OCI-LY7 (cell line): ENCODE measurements at regions of chr19 and their contacts with region 1.

Region 1: DNA sequence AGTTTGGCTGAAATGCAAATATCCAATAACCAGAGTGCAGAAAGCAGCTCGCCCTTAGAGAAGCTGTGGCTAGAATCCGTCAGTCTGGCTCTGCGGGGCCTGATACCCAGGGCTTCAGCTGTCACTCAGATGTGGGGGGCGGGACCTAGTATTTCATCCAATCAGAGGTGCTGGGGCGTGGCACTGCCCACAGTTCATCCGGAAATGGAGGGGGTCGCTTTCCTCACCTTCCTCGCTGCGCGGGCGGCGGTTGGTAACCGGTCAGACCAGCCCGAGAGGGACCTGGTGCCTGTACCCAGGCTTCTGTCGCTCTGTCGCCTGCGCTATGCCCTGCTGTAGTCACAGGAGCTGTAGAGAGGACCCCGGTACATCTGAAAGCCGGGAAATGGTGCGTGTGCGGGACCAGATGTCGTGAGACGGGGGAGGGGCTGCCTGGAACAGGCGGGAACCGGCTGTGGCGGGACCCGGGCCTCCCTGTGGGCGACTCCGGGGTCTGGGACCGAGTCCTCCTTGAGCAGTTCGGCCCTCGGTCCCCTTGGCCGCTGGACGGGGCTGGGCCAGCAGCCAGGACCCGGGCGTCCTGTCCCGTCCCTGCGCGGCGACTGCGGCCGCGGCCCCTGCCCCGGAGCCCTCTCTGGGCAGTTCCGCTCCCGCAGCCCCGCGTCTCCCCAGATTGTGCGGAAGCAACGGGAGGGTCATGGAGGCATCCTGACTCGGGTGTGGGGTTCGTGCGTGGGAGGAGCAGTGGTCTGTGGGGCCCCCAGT is at the start of gene ZNF700:
- DNase-seq: peak; percentile 97
- H3K4me3 ChIP-seq: peak within 1 kb of the TSS; percentile 86
- H3K27ac ChIP-seq: peak within 1 kb of the TSS; percentile 94
- H3K4me1 ChIP-seq: peaks cover 17% of the 10 kb centered on the region
- CTCF ChIP-seq: no peak
- total RNA-seq, gene ZNF700: 18.2 and 20.4 TPM in 2 replicates

Region 2: DNA sequence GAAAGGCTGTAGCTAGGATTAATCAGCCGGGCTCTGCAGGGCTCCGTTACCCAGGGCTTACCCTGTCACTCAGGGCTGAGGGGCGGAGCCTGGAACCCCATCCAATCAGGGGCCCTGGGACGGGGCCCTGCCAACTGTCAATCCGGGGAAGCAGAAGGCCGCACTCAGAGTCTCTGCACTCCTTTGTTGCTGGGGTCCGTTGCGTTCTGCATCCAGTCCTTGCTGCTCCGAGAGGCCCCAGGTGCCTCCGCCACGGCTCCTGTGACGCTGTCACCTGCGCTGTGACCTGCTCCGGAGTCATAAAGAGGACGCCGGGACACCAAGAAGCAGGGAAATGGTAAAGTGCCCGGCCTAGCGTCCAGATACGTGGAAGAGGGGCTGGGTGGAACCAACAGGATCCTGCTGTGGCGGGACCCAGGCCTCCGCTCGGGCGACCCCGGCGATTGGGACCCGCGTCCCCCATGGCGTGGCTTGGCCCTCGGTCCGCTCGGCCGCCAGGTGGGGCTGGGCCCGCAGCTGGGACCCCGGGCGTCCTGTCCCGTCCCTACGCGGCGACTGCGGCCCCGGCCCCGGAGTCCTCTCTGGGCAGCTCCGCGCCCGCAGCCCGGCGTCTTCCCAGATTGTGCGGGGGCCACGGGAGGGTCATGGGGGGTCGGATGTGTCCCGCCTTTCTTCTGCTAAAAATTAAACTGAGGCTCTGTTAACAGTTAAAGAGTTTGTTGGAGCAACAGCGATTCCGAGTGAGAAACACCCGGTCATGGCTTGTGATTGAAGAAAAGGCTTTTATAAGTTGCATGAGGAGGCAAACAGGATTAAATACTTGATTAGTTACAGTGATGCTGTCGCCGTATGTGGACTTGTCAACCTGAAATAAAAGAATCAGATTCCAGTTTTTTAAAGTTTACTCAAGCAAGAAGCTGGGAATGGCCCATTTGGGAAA is 126.4 kb before region 1 on chr19 and contains the start of gene ZNF491:
- CTCF ChIA-PET with region 1: no interaction called
- POLR2A ChIA-PET with region 1: no interaction called
- intact Hi-C with region 1: loop called (anchors 5 kb)
- DNase-seq: peak; percentile 94
- H3K4me3 ChIP-seq: peak within 1 kb of the TSS; percentile 75
- H3K27ac ChIP-seq: peak within 1 kb of the TSS; percentile 34
- H3K4me1 ChIP-seq: peaks cover 32% of the 10 kb centered on the region
- CTCF ChIP-seq: peak; percentile 61
- total RNA-seq, gene ZNF491: 1.2 and 2.0 TPM in 2 replicates

Region 3: GRCh38 chr19:11881151-11881800 is 43.8 kb before region 1 on chr19:
- CTCF ChIA-PET with region 1: no interaction called
- POLR2A ChIA-PET with region 1: no interaction called
- intact Hi-C with region 1: loop called (anchors 2 kb)
- DNase-seq: peak; percentile 72
- H3K4me3 ChIP-seq: no peak overlapping the region
- H3K27ac ChIP-seq: no peak overlapping the region
- H3K4me1 ChIP-seq: no peaks in the 10 kb centered on the region
- CTCF ChIP-seq: peak; percentile 83

Region 4: GRCh38 chr19:11964858-11965645 is 40.0 kb after region 1 on chr19 and contains the start of gene ZNF763:
- CTCF ChIA-PET with region 1: interaction called, 5 read pairs
- POLR2A ChIA-PET with region 1: no interaction called
- intact Hi-C with region 1: loop called (anchors 1 kb)
- DNase-seq: peak; percentile 95
- H3K4me3 ChIP-seq: peak within 1 kb of the TSS; percentile 85
- H3K27ac ChIP-seq: peak within 1 kb of the TSS; percentile 63
- H3K4me1 ChIP-seq: peaks cover 15% of the 10 kb centered on the region
- CTCF ChIP-seq: no peak
- total RNA-seq, gene ZNF763: 2.7 and 2.8 TPM in 2 replicates

Region 5: GRCh38 chr19:12052497-12053169 is 127.6 kb after region 1 on chr19 and contains the start of gene ZNF878:
- CTCF ChIA-PET with region 1: no interaction called
- POLR2A ChIA-PET with region 1: no interaction called
- intact Hi-C with region 1: loop called (anchors 5 kb)
- DNase-seq: peak; percentile 82
- H3K4me3 ChIP-seq: peak within 1 kb of the TSS; percentile 81
- H3K27ac ChIP-seq: no peak within 1 kb of the TSS
- H3K4me1 ChIP-seq: peaks cover 9% of the 10 kb centered on the region
- CTCF ChIP-seq: peak; percentile 59
- total RNA-seq, gene ZNF878: 0.72 and 1.0 TPM in 2 replicates